Activated T-helper 1 cell treated with anti-CD3 and anti-CD28 coated beads, Interleukin-12 subunit alpha, Interleukin-12 subunit beta, Interleukin-2, Interleukin-4 antibody, amounts not matched to agents 30 ng/mL and 10 ng/mL and 1 ng/mL, durations not matched to agents 14 hours and 24 hours and 36 hours (primary cell): ENCODE measurements at regions of chr17 and their contacts with region 1.

Region 1: DNA sequence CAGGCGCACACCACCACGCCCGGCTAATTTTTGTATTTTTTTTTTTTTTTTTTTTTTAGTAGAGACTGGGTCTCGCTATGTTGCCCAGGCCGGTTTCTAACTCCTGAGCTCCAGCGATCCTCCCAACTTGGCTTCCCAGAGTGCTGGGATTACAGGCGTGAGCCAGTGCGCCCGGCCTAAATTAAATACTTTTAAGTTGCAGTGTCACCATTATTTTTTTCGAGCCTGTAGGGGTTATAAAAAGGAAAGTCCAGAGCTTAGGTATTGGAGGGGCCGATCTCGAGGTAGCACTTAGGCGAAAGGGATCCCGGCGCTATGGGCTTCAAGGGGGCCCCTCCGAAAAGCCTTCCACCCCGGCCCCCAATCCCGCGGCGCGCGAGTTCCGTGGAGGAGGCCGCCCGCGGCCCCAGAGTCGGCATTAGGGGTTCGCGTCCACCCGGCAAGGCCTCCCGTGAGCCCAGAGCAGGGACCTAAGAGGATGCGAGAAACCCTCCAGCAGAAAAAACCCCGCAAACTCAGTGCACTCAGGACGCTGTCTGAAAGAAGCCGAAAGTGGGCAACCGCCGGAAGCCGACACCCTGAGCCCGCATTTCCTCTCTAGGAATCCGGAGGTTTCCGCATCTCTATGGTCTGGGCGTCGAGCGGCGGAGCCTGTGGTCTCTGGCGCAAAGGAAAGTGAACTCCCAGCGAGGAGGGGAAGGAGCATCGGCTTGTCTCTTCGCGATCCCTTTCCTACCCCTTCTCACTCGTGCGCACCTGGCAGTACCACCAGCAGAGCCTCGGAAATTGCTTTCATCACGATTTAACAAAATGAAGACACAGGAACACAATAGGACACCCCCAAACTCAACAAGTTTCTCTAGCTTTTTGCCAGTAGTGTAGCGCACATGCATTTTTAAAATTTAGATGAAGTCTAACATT is 14.1 kb upstream of the RGS9 start:
- DNase-seq: peak; percentile 82
- H3K4me3 Mint-ChIP-seq: peak overlapping the region; percentile 82
- H3K27ac Mint-ChIP-seq: peak overlapping the region; percentile 89
- H3K4me1 Mint-ChIP-seq: peaks cover 32% of the 10 kb centered on the region
- H3K27me3 Mint-ChIP-seq: peaks cover 4% of the 10 kb centered on the region

Region 2: GRCh38 chr17:64975329-64976087 is 147.6 kb before region 1 on chr17:
- intact Hi-C with region 1: loop called (anchors 1 kb)
- DNase-seq: peak; percentile 98
- H3K4me3 Mint-ChIP-seq: peak overlapping the region; percentile 74
- H3K27ac Mint-ChIP-seq: peak overlapping the region; percentile 99
- H3K4me1 Mint-ChIP-seq: peaks cover 60% of the 10 kb centered on the region
- H3K27me3 Mint-ChIP-seq: no peaks in the 10 kb centered on the region

Region 3: GRCh38 chr17:65055348-65056261 is 67.5 kb before region 1 on chr17:
- intact Hi-C with region 1: loop called (anchors 1 kb)
- DNase-seq: peak; percentile 53
- H3K4me3 Mint-ChIP-seq: peak overlapping the region; percentile 94
- H3K27ac Mint-ChIP-seq: peak overlapping the region; percentile 93
- H3K4me1 Mint-ChIP-seq: peaks cover 32% of the 10 kb centered on the region
- H3K27me3 Mint-ChIP-seq: peaks cover 5% of the 10 kb centered on the region

Region 4: GRCh38 chr17:65163990-65164495 is 40.9 kb after region 1 on chr17:
- intact Hi-C with region 1: no loop called
- DNase-seq: peak; percentile 51
- H3K4me3 Mint-ChIP-seq: no peak overlapping the region
- H3K27ac Mint-ChIP-seq: peak overlapping the region; percentile 67
- H3K4me1 Mint-ChIP-seq: peaks cover 25% of the 10 kb centered on the region
- H3K27me3 Mint-ChIP-seq: peaks cover 2% of the 10 kb centered on the region

Region 5: GRCh38 chr17:65181237-65182061 is 58.4 kb after region 1 on chr17:
- intact Hi-C with region 1: loop called (anchors 2 kb)
- DNase-seq: peak; percentile 32
- H3K4me3 Mint-ChIP-seq: peak overlapping the region; percentile 31
- H3K27ac Mint-ChIP-seq: peak overlapping the region; percentile 78
- H3K4me1 Mint-ChIP-seq: peaks cover 79% of the 10 kb centered on the region
- H3K27me3 Mint-ChIP-seq: peaks cover 11% of the 10 kb centered on the region

Region 6: GRCh38 chr17:65381152-65381551 is 258.1 kb after region 1 on chr17:
- intact Hi-C with region 1: no loop called
- DNase-seq: no peak
- H3K4me3 Mint-ChIP-seq: no peak overlapping the region
- H3K27ac Mint-ChIP-seq: no peak overlapping the region
- H3K4me1 Mint-ChIP-seq: no peaks in the 10 kb centered on the region
- H3K27me3 Mint-ChIP-seq: peaks cover 7% of the 10 kb centered on the region

Region 7: GRCh38 chr17:65422714-65423113 is 299.6 kb after region 1 on chr17:
- intact Hi-C with region 1: no loop called
- DNase-seq: no peak
- H3K4me3 Mint-ChIP-seq: no peak overlapping the region
- H3K27ac Mint-ChIP-seq: no peak overlapping the region
- H3K4me1 Mint-ChIP-seq: no peaks in the 10 kb centered on the region
- H3K27me3 Mint-ChIP-seq: no peaks in the 10 kb centered on the region

Region 8: GRCh38 chr17:65556014-65556909 is 433.2 kb after region 1 on chr17:
- intact Hi-C with region 1: loop called (anchors 5 kb)
- DNase-seq: peak; percentile 76
- H3K4me3 Mint-ChIP-seq: no peak overlapping the region
- H3K27ac Mint-ChIP-seq: no peak overlapping the region
- H3K4me1 Mint-ChIP-seq: peaks cover 29% of the 10 kb centered on the region
- H3K27me3 Mint-ChIP-seq: peaks cover 20% of the 10 kb centered on the region